A549 (cell line): ENCODE measurements at regions of chr7 and their contacts with region 1.

Region 1: DNA sequence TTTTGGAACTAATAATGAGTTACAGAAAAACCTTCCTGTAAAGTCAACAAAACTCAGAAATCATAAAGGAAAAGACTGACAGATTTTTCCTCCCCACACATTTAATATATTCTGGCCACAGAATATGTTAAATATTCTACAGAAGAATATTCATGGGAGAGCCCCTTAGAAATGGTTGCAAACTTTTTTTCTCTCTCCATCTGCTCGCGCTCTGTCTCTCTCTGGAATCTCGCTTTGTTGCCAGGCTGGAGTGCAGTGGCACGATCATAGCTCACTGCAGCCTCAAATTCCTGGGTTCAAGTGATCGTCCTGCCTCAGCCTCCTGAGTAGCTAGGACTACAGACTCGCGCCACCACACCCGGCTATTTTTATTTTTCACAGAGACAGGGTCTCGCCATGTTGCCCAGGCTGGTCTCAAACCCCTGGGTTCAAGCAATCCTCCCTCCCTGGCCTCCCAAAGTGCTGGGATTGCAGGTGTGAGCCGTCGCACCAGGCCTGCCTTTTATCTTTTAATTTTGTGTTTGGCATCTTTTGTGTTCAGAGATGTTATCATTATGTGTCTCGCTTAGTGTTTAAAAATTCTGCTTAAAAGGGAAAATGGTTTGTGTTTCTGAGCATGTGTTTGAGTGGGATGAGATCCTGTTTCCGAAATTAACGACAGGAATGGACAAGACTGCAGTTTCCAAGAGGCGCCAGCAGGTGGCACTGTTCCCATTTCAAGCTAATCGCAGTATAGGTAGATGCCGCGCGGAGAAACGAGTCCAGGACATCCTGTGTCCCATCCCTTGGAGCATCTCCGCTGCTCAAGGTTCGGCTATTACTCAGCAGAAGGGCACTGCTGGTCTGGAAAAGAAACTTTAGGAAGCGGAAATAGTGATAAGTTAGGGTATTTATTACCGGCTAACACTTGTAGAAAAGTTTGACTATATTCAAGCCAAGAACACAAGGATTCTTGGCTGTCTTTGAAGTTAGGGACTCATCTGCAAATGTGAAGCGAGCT is 23.1 kb upstream of the ST7 start:
- DNase-seq: peak; percentile 76 to 82
- ATAC-seq: peak; percentile 89 to 95
- H3K4me3 ChIP-seq: no peak overlapping the region
- H3K27ac ChIP-seq: no peak overlapping the region
- H3K4me1 ChIP-seq: peaks cover 5% of the 10 kb centered on the region; the same call in 1 of the 3 replicates
- CTCF ChIP-seq: peak; percentile 95
- EP300 ChIP-seq: no peak
- POLR2A ChIP-seq: no peak
- RAD21 ChIP-seq: peak; percentile 86 to 92

Region 2: GRCh38 chr7:116854132-116854531 is 76.1 kb before region 1 on chr7:
- CTCF ChIA-PET with region 1: no interaction called
- POLR2A ChIA-PET with region 1: no interaction called
- DNase-seq: no peak
- ATAC-seq: no peak
- H3K4me3 ChIP-seq: no peak overlapping the region
- H3K27ac ChIP-seq: no peak overlapping the region
- H3K4me1 ChIP-seq: no peaks in the 10 kb centered on the region
- CTCF ChIP-seq: no peak
- EP300 ChIP-seq: no peak
- POLR2A ChIP-seq: no peak
- RAD21 ChIP-seq: no peak

Region 3: DNA sequence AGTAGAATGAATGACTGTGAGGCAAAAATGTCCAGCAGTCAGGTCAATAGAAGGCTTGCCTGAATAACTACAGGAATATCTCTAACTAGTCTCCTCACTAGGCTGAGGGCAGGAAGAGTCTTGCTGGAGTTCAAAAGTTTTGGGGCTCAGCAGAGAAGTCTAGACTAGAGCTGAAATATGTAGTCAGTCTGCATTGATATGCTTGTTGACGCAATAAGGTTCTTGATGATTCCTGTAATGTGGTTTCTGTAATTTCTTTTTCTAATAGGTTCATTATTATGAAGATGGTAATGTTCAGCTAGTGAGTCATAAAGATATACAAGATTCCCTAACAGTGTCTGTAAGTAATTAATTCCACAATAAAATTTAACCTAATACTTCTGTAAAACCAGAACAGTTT is 18.4 kb before region 1 on chr7:
- CTCF ChIA-PET with region 1: interaction called, 18 read pairs
- POLR2A ChIA-PET with region 1: no interaction called
- DNase-seq: no peak
- ATAC-seq: no peak
- H3K4me3 ChIP-seq: no peak overlapping the region
- H3K27ac ChIP-seq: no peak overlapping the region
- H3K4me1 ChIP-seq: no peaks in the 10 kb centered on the region
- CTCF ChIP-seq: no peak
- EP300 ChIP-seq: no peak
- POLR2A ChIP-seq: no peak
- RAD21 ChIP-seq: no peak

Region 4: GRCh38 chr7:116942504-116942903 is 12.3 kb after region 1 on chr7:
- CTCF ChIA-PET with region 1: interaction called, 47 read pairs
- POLR2A ChIA-PET with region 1: no interaction called
- DNase-seq: no peak
- ATAC-seq: no peak
- H3K4me3 ChIP-seq: no peak overlapping the region
- H3K27ac ChIP-seq: no peak overlapping the region
- H3K4me1 ChIP-seq: no peaks in the 10 kb centered on the region
- CTCF ChIP-seq: no peak
- EP300 ChIP-seq: no peak
- POLR2A ChIP-seq: no peak
- RAD21 ChIP-seq: no peak

Region 5: GRCh38 chr7:117119192-117119924 is 189.1 kb after region 1 on chr7:
- CTCF ChIA-PET with region 1: interaction called, 22 read pairs
- POLR2A ChIA-PET with region 1: no interaction called
- DNase-seq: peak in 1 of 2 experiments; percentile 79
- ATAC-seq: peak; percentile 61 to 81; a peak in 4 of 6 replicates
- H3K4me3 ChIP-seq: no peak overlapping the region
- H3K27ac ChIP-seq: no peak overlapping the region
- H3K4me1 ChIP-seq: peaks cover 22% of the 10 kb centered on the region
- CTCF ChIP-seq: peak; percentile 93
- EP300 ChIP-seq: no peak
- POLR2A ChIP-seq: no peak
- RAD21 ChIP-seq: peak; percentile 89 to 90

Region 6: GRCh38 chr7:117127585-117128168 is 197.5 kb after region 1 on chr7:
- CTCF ChIA-PET with region 1: interaction called, 24 read pairs
- POLR2A ChIA-PET with region 1: no interaction called
- DNase-seq: peak in 1 of 2 experiments; percentile 69
- ATAC-seq: peak; percentile 64 to 71; a peak in 4 of 6 replicates
- H3K4me3 ChIP-seq: no peak overlapping the region
- H3K27ac ChIP-seq: no peak overlapping the region; a peak in 1 of 6 replicates
- H3K4me1 ChIP-seq: peaks cover 74% of the 10 kb centered on the region
- CTCF ChIP-seq: peak; percentile 87
- EP300 ChIP-seq: no peak
- POLR2A ChIP-seq: no peak
- RAD21 ChIP-seq: peak; percentile 61 to 70